Colonic mucosa (tissue), 4 donors: ENCODE measurements at regions of chr9 and their contacts with region 1.

Region 1: GRCh38 chr9:17810728-17811571 is 232.1 kb downstream of the SH3GL2 start:
- DNase-seq: peak; percentile 77
- H3K4me3 ChIP-seq: no peak overlapping the region
- H3K27ac ChIP-seq: no peak overlapping the region
- H3K4me1 ChIP-seq: no peaks in the 10 kb centered on the region
- H3K27me3 ChIP-seq: no peaks in the 10 kb centered on the region
- CTCF ChIP-seq: peak; percentile 87

Region 2: DNA sequence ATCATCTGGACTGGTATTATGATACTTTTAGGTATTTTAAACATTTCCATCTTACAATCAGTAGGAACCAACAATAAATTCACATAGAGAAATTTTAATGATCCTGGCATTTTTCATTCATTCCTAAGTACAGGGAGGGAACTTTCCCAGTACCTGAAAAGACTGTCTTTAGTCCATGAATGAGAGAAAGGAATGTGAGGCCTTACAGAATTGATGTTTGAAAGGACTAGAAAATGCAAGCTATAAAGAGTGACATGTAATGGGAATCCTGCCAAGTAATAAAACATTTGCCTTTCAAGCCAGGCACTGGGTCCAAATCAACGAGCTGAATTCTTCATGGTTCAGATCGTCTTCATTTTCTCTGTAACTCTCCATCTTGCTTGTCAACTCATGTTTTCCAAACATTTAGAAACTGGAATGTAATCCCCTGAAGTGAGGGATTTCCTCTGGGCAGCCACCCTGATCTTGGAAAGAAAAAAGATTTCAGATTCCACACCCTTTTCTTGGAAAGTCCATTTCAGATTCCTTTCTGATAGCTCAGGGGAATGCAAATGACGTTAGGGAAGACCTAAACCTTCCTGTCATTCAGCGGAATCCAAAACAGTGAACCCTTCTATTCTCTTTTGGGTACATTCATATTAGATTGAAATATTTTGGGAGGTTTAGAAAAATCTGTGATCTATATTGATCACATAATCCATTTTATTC is 83.7 kb after region 1 on chr9:
- intact Hi-C with region 1: no loop called
- DNase-seq: no peak
- H3K4me3 ChIP-seq: no peak overlapping the region
- H3K27ac ChIP-seq: no peak overlapping the region
- H3K4me1 ChIP-seq: no peaks in the 10 kb centered on the region
- H3K27me3 ChIP-seq: no peaks in the 10 kb centered on the region
- CTCF ChIP-seq: no peak

Region 3: DNA sequence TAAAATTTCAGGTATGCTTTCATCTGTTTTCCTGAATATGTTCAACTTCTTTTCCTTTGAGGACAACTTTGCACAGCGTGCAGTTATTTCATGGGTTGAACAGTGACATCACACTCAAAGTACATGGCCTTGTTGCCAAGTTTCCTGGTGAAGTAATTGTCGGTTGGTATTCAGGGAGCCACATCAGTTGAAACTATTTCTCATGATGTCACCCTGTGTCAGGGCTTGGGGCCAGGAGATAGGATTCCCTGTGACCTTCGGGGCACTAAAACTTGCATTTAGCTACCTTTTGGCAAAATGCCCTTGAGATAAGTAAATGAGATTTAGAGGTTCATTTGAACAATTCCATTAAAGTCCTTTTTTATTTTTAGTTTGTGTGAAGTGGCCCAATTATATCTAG is 151.8 kb after region 1 on chr9:
- intact Hi-C with region 1: loop called (anchors 10 kb)
- DNase-seq: peak; percentile 35
- H3K4me3 ChIP-seq: no peak overlapping the region
- H3K27ac ChIP-seq: no peak overlapping the region
- H3K4me1 ChIP-seq: no peaks in the 10 kb centered on the region
- H3K27me3 ChIP-seq: no peaks in the 10 kb centered on the region
- CTCF ChIP-seq: no peak

Region 4: GRCh38 chr9:18075253-18075952 is 264.5 kb after region 1 on chr9:
- intact Hi-C with region 1: loop called (anchors 10 kb)
- DNase-seq: peak; percentile 87
- H3K4me3 ChIP-seq: no peak overlapping the region
- H3K27ac ChIP-seq: peak overlapping the region; percentile 69
- H3K4me1 ChIP-seq: no peaks in the 10 kb centered on the region
- H3K27me3 ChIP-seq: no peaks in the 10 kb centered on the region
- CTCF ChIP-seq: no peak

Region 5: GRCh38 chr9:18143028-18143745 is 332.2 kb after region 1 on chr9:
- intact Hi-C with region 1: loop called (anchors 10 kb)
- DNase-seq: peak; percentile 35
- H3K4me3 ChIP-seq: no peak overlapping the region
- H3K27ac ChIP-seq: no peak overlapping the region
- H3K4me1 ChIP-seq: no peaks in the 10 kb centered on the region
- H3K27me3 ChIP-seq: no peaks in the 10 kb centered on the region
- CTCF ChIP-seq: peak; percentile 29

Region 6: GRCh38 chr9:18208154-18209059 is 397.5 kb after region 1 on chr9:
- intact Hi-C with region 1: loop called (anchors 2 kb)
- DNase-seq: peak; percentile 87
- H3K4me3 ChIP-seq: no peak overlapping the region
- H3K27ac ChIP-seq: peak overlapping the region; percentile 56
- H3K4me1 ChIP-seq: no peaks in the 10 kb centered on the region
- H3K27me3 ChIP-seq: no peaks in the 10 kb centered on the region
- CTCF ChIP-seq: peak; percentile 46